Pancreas (tissue), 10 donors: ENCODE measurements at regions of chr11 and their contacts with region 1.

Region 1: DNA sequence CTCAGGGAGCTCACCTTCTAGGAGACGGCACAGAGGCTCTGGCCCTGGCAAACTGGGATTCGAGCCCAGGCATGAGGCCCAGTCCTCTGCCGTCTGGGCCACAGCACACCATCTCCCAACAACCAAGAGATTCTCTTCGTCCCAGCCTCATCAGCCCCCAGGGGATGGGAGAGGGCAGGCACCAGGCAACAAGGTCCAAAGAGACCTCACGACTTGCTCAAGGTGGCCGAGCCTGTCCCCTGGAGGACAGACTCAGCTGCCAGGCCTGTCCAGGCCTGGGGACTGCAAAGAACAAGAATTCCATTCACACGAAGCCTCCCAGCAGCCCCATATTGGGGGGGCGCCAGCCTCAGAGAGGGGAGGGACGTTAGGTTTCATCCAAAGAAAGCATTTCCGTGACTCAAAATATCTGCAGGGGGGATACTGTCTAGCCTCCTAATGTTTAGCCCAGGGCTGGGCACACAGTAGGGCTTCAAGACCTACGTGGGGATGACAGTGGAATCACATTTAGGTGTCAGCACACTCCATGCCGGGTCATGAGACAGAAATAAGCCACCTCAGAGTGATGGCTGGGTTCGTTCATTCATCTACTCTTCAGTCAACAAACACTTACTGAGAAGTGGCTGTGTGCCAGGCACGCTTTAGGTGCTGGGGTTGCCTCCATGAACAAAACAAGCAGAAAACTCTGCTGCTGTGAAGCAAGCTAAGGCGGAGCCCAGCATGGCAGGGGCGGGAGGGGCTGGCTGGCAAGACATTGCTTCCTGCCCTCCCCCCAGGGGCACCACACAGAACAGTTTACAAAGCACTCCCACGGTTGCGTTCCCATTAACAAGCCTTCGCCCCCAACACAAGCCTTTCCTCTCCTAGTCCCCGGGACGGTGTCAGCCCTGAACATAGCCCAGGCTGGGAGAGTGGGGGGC is 1.2 kb downstream of the CARNS1 start:
- DNase-seq: peak in 2 of 6 donors; percentile 68 to 74
- ATAC-seq: no peak
- H3K4me3 ChIP-seq: no peak overlapping the region
- H3K27ac ChIP-seq: no peak overlapping the region
- H3K4me1 ChIP-seq: peaks cover 0 to 14% (median 13%) of the 10 kb centered on the region in 3 donors
- H3K27me3 ChIP-seq: no peaks in the 10 kb centered on the region
- CTCF ChIP-seq: no peak

Region 2: GRCh38 chr11:67507864-67508485 is 91.3 kb after region 1 on chr11 and contains the start of gene CDK2AP2:
- intact Hi-C with region 1: loop called in 1 of 3 experiments (anchors 10 kb)
- DNase-seq: peak; percentile 98 to 100 (median 100)
- ATAC-seq: peak; percentile 69 to 86 (median 78)
- H3K4me3 ChIP-seq: peak within 1 kb of the TSS; percentile 50 to 86 (median 85)
- H3K27ac ChIP-seq: peak within 1 kb of the TSS; percentile 95 to 99 (median 98)
- H3K4me1 ChIP-seq: peaks cover 0 to 26% (median 12%) of the 10 kb centered on the region in 3 donors
- H3K27me3 ChIP-seq: no peaks in the 10 kb centered on the region
- CTCF ChIP-seq: no peak
- total RNA-seq, gene CDK2AP2: 27.1 to 41.8 (median 35.2) TPM

Region 3: DNA sequence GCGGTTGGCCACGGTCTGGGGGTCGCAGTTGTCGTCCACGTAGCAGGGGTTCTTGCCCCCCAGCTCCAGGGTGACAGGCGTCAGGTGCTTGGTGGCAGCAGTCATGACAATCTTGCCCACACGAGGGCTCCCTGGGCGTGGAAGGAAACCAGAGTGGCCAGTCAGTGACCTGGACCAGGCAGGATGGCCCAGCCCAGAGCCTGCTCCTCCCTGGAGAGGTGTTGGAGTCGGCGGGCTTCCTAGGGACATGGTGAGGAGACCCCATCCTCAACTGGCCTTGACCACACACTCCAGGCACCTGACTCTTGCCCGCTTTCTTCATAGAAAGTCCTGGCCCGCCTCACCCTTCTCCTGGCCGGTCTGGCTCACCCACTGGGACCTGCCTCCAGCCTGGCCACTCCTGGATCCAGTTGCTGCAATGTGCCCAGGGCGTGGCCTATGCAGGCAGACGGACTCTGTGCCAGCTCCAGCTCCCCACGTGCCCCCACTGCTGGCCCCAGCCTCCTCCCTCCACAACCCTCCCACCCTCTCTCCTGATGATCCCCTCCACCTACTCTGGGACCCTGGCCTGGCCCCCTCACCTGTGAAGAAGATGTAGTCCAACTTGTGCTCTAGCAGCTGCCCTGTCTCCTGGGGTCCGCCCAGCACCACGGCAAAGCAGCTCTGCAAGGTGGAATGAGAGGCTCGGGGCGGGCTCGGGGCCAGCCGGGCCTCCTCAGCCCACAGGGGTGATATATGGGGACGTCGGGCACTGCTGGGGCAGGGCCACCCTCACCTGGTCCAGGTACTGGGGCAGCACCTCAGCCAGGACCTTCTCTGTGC is 249.1 kb after region 1 on chr11:
- intact Hi-C with region 1: no loop called
- DNase-seq: peak in 4 of 6 donors; percentile 51 to 82 (median 62)
- ATAC-seq: peak; percentile 58 to 93 (median 72)
- H3K4me3 ChIP-seq: no peak overlapping the region
- H3K27ac ChIP-seq: no peak overlapping the region
- H3K4me1 ChIP-seq: no peaks in the 10 kb centered on the region
- H3K27me3 ChIP-seq: no peaks in the 10 kb centered on the region
- CTCF ChIP-seq: peak in 3 of 4 donors; percentile 13 to 19 (median 15)